OCI-LY7 (cell line): ENCODE measurements at regions of chr2 and their contacts with region 1.

Region 1: DNA sequence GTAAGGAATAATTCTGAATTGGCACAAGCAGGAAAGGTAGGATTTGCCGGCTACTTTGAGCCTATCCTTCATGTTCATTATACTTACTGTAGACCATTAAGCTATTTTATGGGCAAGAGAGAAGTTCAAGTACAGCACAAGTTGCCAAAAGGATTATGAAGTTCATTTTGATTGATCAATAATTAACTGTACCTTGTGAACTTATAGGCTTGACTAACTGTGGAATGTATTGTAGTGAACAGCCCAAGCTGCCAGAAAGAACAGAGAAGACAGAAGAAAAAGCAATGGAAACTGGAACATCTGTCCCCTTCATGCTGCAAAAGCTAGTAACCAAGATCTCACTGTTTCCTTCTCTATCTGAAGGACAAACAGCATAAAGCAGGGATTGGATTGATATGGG is 810.1 kb upstream of the ZEB2 start:
- DNase-seq: no peak
- H3K4me3 ChIP-seq: no peak overlapping the region
- H3K27ac ChIP-seq: no peak overlapping the region
- H3K4me1 ChIP-seq: peaks cover 6% of the 10 kb centered on the region
- CTCF ChIP-seq: no peak

Region 2: DNA sequence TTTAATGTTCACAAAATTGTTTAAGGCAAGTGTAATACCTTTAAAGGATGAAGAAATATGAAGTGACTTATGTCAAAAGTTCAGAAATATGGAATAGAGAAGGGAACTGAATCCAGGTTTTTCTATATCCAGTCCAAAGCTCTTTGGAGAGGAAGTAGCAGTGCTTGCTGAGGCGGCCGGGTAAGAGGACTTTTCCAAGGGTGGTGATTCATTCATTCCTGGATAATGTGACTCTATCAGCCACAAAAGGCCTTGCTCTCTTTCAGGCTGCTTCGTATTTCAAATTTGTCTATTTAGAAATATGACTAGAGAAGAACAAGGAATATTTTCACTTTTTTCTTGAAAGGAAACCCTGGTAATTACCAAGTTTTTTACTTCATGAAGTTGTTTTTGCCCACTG is 20.0 kb after region 1 on chr2:
- CTCF ChIA-PET with region 1: no interaction called
- POLR2A ChIA-PET with region 1: interaction called, 19 read pairs
- intact Hi-C with region 1: loop called (anchors 2 kb)
- DNase-seq: no peak
- H3K4me3 ChIP-seq: no peak overlapping the region
- H3K27ac ChIP-seq: no peak overlapping the region
- H3K4me1 ChIP-seq: no peaks in the 10 kb centered on the region
- CTCF ChIP-seq: no peak